Activated T-helper 2 cell treated with anti-CD3 and anti-CD28 coated beads, Interferon-gamma antibody, Interleukin-2, Interleukin-4, amounts not matched to agents 10 μg/mL and 5 μg/mL and 100 μg/mL, durations not matched to agents 14 hours and 24 hours and 36 hours (primary cell): ENCODE measurements at regions of chr11 and their contacts with region 1.

Region 1: DNA sequence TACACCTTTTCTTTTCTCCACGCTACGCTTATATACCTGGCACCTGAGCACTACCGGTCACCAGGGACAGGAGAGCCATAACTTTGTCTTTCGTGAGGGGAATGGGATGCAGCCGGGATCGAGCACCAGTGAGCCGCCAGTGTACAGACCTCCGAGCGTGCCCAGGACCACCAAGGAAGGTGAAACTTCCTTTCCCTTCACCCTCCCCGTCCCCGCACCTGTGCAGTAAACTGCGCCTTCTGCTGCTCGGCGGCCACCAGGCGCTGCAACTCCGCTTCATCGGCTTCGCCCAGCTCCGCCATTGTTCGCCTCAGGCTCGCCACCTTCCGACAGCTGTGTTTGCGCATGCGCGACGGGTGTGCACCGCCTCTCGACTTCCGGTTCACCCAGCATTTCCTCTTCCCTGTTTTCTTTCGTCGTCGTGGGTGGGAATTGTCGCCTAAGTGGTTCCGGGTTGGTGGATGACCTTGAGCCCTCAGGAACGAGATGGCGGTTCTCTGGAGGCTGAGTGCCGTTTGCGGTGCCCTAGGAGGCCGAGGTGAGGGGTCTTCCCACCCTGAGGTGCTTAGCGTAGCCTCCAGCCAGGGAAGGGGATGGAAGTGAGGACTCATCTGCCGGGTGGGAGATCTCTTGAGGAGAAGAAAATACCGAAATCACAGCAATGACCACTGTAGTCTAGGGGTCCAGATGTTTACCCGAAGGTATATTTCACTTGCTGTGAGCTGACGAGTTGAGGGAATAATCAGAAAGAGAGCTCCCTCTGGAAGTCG is at the starts of genes SDHD and TIMM8B:
- DNase-seq: peak; percentile 96
- H3K4me3 Mint-ChIP-seq: peak within 1 kb of the TSS; percentile 99
- H3K27ac Mint-ChIP-seq: peak within 1 kb of the TSS; percentile 91
- H3K4me1 Mint-ChIP-seq: peaks cover 53% of the 10 kb centered on the region
- H3K27me3 Mint-ChIP-seq: no peaks in the 10 kb centered on the region
- total RNA-seq, gene SDHD: 81.7 and 91.0 TPM in 2 replicates
- total RNA-seq, gene TIMM8B: 72.6 and 77.5 TPM in 2 replicates

Region 2: DNA sequence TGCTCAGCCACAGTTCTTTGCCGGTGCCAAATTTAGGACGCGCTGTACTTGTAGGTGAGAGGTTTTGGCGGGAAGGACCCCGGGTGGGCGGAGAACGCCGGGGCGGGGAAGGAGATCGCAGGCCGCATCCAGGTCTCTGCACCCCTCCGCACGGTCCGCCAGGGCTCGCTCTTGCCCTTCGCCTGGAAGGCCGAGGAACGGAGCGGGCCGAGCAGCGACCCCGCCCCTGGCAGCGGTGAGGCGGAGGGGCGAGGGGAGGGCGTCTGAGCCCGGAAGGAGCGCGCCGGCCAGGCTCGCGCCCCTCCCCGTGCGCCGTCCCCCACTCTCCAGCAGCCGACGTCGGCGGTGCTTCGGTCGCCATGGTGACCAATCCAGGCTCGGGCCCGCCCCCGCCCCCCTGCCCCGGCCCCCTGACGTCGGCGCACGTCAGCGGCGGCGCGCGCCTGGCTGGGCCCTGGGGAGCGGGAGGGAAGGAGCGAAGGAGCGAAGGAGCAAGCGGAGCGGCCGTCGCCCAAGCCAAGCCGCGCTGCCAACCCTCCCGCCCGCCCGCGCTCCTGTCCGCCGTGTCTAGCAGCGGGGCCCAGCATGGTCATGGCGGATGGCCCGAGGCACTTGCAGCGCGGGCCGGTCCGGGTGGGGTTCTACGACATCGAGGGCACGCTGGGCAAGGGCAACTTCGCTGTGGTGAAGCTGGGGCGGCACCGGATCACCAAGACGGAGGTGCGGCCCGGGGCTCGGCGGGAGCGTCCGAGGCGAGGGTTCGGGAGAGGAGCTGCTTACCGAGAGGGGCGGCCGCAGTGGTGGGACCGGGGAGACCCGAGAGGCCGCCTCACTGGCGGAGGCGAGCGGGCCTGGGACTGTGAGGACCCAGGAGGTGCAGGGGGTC is 484.4 kb before region 1 on chr11 and contains the start of gene SIK2:
- intact Hi-C with region 1: loop called (anchors 10 kb)
- DNase-seq: peak; percentile 86
- H3K4me3 Mint-ChIP-seq: peak within 1 kb of the TSS; percentile 96
- H3K27ac Mint-ChIP-seq: peak within 1 kb of the TSS; percentile 88
- H3K4me1 Mint-ChIP-seq: peaks cover 31% of the 10 kb centered on the region
- H3K27me3 Mint-ChIP-seq: peaks cover 6% of the 10 kb centered on the region
- total RNA-seq, gene SIK2: 9.9 TPM in 2 replicates

Region 3: GRCh38 chr11:111878849-111879636 is 207.6 kb before region 1 on chr11 and contains the starts of genes CFAP68 and FDXACB1:
- intact Hi-C with region 1: loop called (anchors 1 kb)
- DNase-seq: peak; percentile 94
- H3K4me3 Mint-ChIP-seq: peak within 1 kb of the TSS; percentile 96
- H3K27ac Mint-ChIP-seq: peak within 1 kb of the TSS; percentile 100
- H3K4me1 Mint-ChIP-seq: peaks cover 13% of the 10 kb centered on the region
- H3K27me3 Mint-ChIP-seq: no peaks in the 10 kb centered on the region
- total RNA-seq, gene CFAP68: 19.4 and 22.2 TPM in 2 replicates
- total RNA-seq, gene FDXACB1: 7.4 and 8.2 TPM in 2 replicates

Region 4: GRCh38 chr11:112024773-112025678 is 61.6 kb before region 1 on chr11 and contains the start of gene DLAT:
- intact Hi-C with region 1: loop called (anchors 2 kb)
- DNase-seq: peak; percentile 86
- H3K4me3 Mint-ChIP-seq: peak within 1 kb of the TSS; percentile 99
- H3K27ac Mint-ChIP-seq: peak within 1 kb of the TSS; percentile 99
- H3K4me1 Mint-ChIP-seq: peaks cover 13% of the 10 kb centered on the region
- H3K27me3 Mint-ChIP-seq: no peaks in the 10 kb centered on the region
- total RNA-seq, gene DLAT: 47.2 and 47.3 TPM in 2 replicates

Region 5: GRCh38 chr11:112074026-112074811 is 12.4 kb before region 1 on chr11 and contains the start of gene NKAPD1:
- intact Hi-C with region 1: loop called (anchors 1 kb)
- DNase-seq: peak; percentile 75
- H3K4me3 Mint-ChIP-seq: peak within 1 kb of the TSS; percentile 94
- H3K27ac Mint-ChIP-seq: peak within 1 kb of the TSS; percentile 92
- H3K4me1 Mint-ChIP-seq: peaks cover 23% of the 10 kb centered on the region
- H3K27me3 Mint-ChIP-seq: peaks cover 8% of the 10 kb centered on the region
- total RNA-seq, gene NKAPD1: 24.6 and 25.0 TPM in 2 replicates